ENCODE measurements at regions of chr2 and their contacts with region 1.

Region 1: DNA sequence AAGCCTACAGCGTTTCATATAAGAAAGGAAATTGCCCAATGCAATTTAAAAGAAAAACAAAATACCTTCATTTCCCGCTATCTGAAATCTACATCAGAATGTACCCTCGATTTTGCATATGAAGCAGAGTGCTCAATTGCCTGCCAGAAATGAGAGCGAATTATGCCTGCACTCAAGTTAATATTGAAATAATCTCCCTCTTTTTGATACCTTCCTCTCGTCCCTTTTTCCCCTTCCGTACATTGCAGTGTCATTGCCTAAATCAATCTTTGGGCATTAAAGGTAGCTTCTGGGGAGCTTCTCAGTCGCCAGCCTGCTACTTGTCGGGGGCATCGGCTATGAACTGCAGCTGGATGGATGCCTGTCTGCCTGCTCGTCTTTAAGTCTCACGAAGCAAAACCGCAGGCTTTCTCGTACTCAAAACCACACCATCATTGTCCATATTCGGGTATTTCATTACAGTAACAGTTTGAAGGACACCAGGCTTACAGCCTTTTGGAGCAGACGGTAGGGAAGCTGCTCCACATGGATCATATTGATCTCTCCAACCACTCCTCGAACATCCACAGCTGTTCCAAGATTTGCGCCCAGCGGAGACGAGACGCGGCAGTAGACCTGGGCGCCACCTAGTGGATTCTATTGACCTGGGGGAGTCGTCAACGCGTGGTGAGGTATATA is 64.0 kb upstream of the HNRNPA3 start:
- DNase-seq: peak; percentile 53 to 75
- H3K4me3 ChIP-seq: peak overlapping the region; percentile 30 to 57 (median 41)
- H3K27ac ChIP-seq: no peak overlapping the region
- H3K4me1 ChIP-seq: no peaks in the 10 kb centered on the region
- H3K27me3 ChIP-seq: peaks cover 0 to 15% of the 10 kb centered on the region in 2 donors
- CTCF ChIP-seq: peak; percentile 56 to 74 (median 60)
- POLR2A ChIP-seq: no peak

Region 2: GRCh38 chr2:176130147-176130956 is 1018.3 kb before region 1 on chr2:
- intact Hi-C with region 1: loop called (anchors 10 kb)
- DNase-seq: no peak
- H3K4me3 ChIP-seq: peak overlapping the region; percentile 52 to 73 (median 60)
- H3K27ac ChIP-seq: peak overlapping the region; percentile 83 to 98
- H3K4me1 ChIP-seq: no peaks in the 10 kb centered on the region
- H3K27me3 ChIP-seq: peaks cover 5 to 79% of the 10 kb centered on the region in 2 donors
- CTCF ChIP-seq: no peak
- POLR2A ChIP-seq: no peak

Region 3: GRCh38 chr2:176432434-176432833 is 716.2 kb before region 1 on chr2:
- intact Hi-C with region 1: no loop called
- DNase-seq: no peak
- H3K4me3 ChIP-seq: no peak overlapping the region
- H3K27ac ChIP-seq: no peak overlapping the region
- H3K4me1 ChIP-seq: no peaks in the 10 kb centered on the region
- H3K27me3 ChIP-seq: no peaks in the 10 kb centered on the region
- CTCF ChIP-seq: no peak
- POLR2A ChIP-seq: no peak

Measured in breast epithelium (tissue), 4 donors.